ENCODE measurements at regions of chr11 and their contacts with region 1.

Region 1: GRCh38 chr11:104907521-104908185 is 9.4 kb upstream of the CASP12 start:
- DNase-seq: peak; percentile 11
- ATAC-seq: peak; percentile 92
- H3K4me3 Mint-ChIP-seq: no peak overlapping the region
- H3K27ac Mint-ChIP-seq: peak overlapping the region; percentile 47
- H3K4me1 Mint-ChIP-seq: peaks cover 30% of the 10 kb centered on the region
- H3K27me3 Mint-ChIP-seq: no peaks in the 10 kb centered on the region

Region 2: GRCh38 chr11:103870821-103871309 is 1036.8 kb before region 1 on chr11:
- CTCF ChIA-PET with region 1: no interaction called
- POLR2A ChIA-PET with region 1: no interaction called
- intact Hi-C with region 1: no loop called
- DNase-seq: no peak
- ATAC-seq: no peak
- H3K4me3 Mint-ChIP-seq: no peak overlapping the region
- H3K27ac Mint-ChIP-seq: no peak overlapping the region
- H3K4me1 Mint-ChIP-seq: no peaks in the 10 kb centered on the region
- H3K27me3 Mint-ChIP-seq: no peaks in the 10 kb centered on the region

Region 3: DNA sequence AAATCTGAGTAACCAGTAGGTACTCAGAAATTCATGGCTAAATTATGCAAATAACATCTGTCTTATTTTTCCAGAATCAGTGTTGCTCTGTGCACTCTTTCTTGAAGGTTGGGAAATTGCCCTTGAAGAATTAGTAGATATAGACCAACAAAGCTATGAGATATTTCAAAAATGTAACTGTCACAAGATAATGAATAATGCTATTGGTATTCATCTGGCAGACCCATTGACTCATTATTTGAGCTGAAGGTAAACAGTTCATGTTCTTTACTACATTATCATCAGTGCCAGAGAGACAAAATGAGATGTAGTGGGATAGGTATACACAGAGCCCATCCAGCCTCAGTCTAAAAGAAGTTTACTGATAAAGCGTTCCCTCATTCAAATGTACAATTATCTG is 284.1 kb before region 1 on chr11:
- CTCF ChIA-PET with region 1: no interaction called
- POLR2A ChIA-PET with region 1: no interaction called
- intact Hi-C with region 1: loop called in 1 of 2 experiments (anchors 5 kb)
- DNase-seq: no peak
- ATAC-seq: peak; percentile 69
- H3K4me3 Mint-ChIP-seq: no peak overlapping the region
- H3K27ac Mint-ChIP-seq: no peak overlapping the region
- H3K4me1 Mint-ChIP-seq: peaks cover 21% of the 10 kb centered on the region
- H3K27me3 Mint-ChIP-seq: no peaks in the 10 kb centered on the region

Region 4: DNA sequence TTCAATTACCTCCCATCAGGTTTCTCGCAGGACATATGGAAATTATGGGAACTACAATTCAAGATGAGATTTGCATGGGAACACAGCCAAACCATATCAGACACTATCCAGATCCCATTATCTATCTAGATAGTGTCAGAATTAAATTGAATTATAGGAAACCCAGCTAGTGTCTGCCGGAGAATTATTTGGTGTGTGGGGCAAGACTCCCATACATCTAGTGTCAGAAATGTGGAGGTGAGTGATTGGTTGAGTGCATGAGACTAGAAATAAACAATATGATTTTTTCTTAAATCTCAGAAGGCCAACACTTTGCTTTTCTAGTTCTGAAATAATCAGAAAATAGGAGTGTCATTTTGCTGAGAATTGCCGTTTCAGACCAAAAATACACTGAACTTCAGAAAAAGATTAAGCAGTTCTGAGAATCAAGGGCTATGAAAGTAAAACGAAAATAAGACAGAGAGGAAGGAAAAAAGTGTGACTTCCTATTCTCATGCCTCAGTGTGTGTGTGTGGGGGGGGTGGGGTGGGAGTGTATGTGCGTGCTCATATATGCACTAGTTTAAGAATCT is 30.7 kb before region 1 on chr11:
- CTCF ChIA-PET with region 1: no interaction called
- POLR2A ChIA-PET with region 1: no interaction called
- intact Hi-C with region 1: loop called in 1 of 2 experiments (anchors 2 kb)
- DNase-seq: no peak
- ATAC-seq: peak; percentile 74
- H3K4me3 Mint-ChIP-seq: peak overlapping the region; percentile 11
- H3K27ac Mint-ChIP-seq: peak overlapping the region; percentile 86
- H3K4me1 Mint-ChIP-seq: peaks cover 27% of the 10 kb centered on the region
- H3K27me3 Mint-ChIP-seq: no peaks in the 10 kb centered on the region

Region 5: DNA sequence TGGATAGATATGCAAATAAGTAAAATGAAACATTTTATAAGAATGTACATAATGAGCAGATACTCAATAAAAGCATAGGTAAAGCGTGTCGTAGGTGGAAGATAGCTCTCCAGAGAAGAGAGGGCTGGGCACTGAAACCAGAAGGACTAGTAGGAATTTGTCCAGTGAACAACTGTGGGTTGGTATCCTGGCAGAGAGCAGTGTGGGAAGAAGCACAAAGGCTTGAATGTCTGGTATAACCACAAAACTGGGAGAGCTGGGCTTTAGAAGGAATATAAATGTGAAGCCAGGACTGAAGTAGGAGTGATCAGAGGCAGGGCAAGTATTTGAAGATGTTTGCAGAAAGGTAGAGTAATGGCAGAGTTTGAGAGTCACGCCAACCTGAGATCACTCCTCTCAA is 170.6 kb after region 1 on chr11:
- CTCF ChIA-PET with region 1: no interaction called
- POLR2A ChIA-PET with region 1: no interaction called
- intact Hi-C with region 1: loop called in 1 of 2 experiments (anchors 5 kb)
- DNase-seq: no peak
- ATAC-seq: no peak
- H3K4me3 Mint-ChIP-seq: no peak overlapping the region
- H3K27ac Mint-ChIP-seq: no peak overlapping the region
- H3K4me1 Mint-ChIP-seq: peaks cover 25% of the 10 kb centered on the region
- H3K27me3 Mint-ChIP-seq: peaks cover 7% of the 10 kb centered on the region

Measured in activated CD4-positive, alpha-beta T cell treated with anti-CD3 and anti-CD28 coated beads for 36 hours (primary cell).